Right ventricle myocardium superior (tissue), 1 donor: ENCODE measurements at regions of chr2 and their contacts with region 1.

Region 1: GRCh38 chr2:102806250-102806837 is 44.5 kb downstream of the TMEM182 start:
- DNase-seq: peak; percentile 75
- ATAC-seq: peak; percentile 71

Region 2: DNA sequence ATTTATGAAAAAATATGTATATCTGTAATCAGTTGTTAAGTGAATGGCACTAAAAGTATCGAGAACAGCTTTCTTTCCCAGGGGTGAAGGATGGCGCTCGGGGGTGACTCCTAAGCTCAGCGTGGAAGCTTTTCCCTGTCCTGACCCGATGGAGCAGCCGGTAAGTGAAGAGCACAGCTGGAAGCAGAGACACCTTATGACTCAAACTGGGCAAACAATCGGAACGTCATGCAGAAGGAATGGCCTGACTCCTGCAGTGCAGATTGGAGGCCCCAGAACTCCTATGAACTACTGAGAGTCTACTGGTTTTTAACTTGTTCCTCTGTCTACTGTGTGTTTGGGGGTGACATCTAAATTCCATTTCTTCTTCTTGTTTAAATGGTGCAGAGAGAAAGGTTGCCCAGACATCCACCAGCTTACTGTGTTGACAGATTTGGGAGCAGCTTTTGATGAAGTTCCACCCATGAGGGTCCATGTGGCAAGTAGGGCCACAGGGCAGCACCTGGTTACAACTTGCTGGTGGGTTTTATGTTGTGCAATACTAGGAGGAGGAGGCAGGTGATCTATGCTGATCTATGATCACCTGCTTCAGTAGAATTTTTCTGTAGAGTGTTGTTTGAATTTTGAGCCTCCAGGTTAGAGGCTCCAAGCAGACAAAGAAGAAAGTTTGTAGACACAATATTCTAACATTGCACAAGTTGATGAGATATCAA is 97.3 kb before region 1 on chr2:
- intact Hi-C with region 1: no loop called
- DNase-seq: no peak
- ATAC-seq: no peak

Region 3: GRCh38 chr2:102753563-102754159 is 52.7 kb before region 1 on chr2:
- intact Hi-C with region 1: loop called (anchors 5 kb)
- DNase-seq: no peak
- ATAC-seq: peak; percentile 75

Region 4: GRCh38 chr2:102841107-102841840 is 34.9 kb after region 1 on chr2:
- intact Hi-C with region 1: no loop called
- DNase-seq: peak; percentile 42
- ATAC-seq: peak; percentile 79